WTC11 (cell line): ENCODE measurements at regions of chr22 and their contacts with region 1.

Region 1: GRCh38 chr22:23281406-23282088 is 101.2 kb downstream of the BCR start:
- DNase-seq: peak; percentile 94
- ATAC-seq: peak; percentile 92
- H3K4me3 Mint-ChIP-seq: no peak overlapping the region
- H3K27ac Mint-ChIP-seq: no peak overlapping the region
- H3K4me1 Mint-ChIP-seq: no peaks in the 10 kb centered on the region; the same call in 1 of the 2 replicates
- H3K27me3 Mint-ChIP-seq: no peaks in the 10 kb centered on the region
- CTCF ChIP-seq: peak; percentile 89

Region 2: DNA sequence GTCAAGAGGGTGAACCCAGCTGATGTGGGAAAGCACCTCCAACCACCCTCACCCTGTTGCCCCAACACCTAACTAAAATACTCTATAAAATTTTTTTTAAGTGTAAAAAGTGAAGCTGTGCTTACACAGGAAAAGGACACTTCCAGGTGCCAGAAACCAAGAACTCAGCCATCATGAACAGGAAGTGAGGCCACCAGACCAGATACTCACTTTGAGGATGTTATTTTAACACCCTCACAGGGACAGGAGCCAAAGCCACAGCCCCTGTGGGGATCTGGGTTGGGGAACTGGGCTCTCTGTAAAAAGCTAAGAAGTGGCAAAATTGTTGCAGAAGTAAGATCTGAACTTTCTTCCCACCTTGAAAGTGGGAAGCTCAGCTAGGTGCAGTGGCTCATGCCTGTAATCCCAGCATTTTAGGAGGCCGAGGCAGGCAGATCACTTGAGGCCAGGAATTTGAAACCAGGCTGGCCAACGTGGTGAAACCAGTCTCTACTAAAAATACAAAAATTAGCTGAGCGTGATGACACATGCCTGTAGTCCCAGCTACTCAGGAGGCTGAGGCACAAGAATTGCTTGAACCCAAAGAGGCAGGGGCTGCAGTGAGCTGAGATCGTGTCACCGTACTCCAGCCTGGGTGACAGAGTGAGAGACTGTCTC is 143.5 kb before region 1 on chr22:
- CTCF ChIA-PET with region 1: interaction called, 13 read pairs
- POLR2A ChIA-PET with region 1: no interaction called
- DNase-seq: no peak
- ATAC-seq: no peak
- H3K4me3 Mint-ChIP-seq: no peak overlapping the region
- H3K27ac Mint-ChIP-seq: no peak overlapping the region
- H3K4me1 Mint-ChIP-seq: peaks cover 20% of the 10 kb centered on the region
- H3K27me3 Mint-ChIP-seq: 0 out of 2 replicates have a peak, but pooled peaks cover 3% of the 10 kb centered on the region
- CTCF ChIP-seq: no peak

Region 3: GRCh38 chr22:23152315-23153113 is 129.0 kb before region 1 on chr22:
- CTCF ChIA-PET with region 1: interaction called, 72 read pairs
- POLR2A ChIA-PET with region 1: interaction called, 3 read pairs
- DNase-seq: no peak
- ATAC-seq: no peak
- H3K4me3 Mint-ChIP-seq: no peak overlapping the region
- H3K27ac Mint-ChIP-seq: no peak overlapping the region
- H3K4me1 Mint-ChIP-seq: peaks cover 47% of the 10 kb centered on the region
- H3K27me3 Mint-ChIP-seq: peaks cover 4% of the 10 kb centered on the region
- CTCF ChIP-seq: no peak

Region 4: DNA sequence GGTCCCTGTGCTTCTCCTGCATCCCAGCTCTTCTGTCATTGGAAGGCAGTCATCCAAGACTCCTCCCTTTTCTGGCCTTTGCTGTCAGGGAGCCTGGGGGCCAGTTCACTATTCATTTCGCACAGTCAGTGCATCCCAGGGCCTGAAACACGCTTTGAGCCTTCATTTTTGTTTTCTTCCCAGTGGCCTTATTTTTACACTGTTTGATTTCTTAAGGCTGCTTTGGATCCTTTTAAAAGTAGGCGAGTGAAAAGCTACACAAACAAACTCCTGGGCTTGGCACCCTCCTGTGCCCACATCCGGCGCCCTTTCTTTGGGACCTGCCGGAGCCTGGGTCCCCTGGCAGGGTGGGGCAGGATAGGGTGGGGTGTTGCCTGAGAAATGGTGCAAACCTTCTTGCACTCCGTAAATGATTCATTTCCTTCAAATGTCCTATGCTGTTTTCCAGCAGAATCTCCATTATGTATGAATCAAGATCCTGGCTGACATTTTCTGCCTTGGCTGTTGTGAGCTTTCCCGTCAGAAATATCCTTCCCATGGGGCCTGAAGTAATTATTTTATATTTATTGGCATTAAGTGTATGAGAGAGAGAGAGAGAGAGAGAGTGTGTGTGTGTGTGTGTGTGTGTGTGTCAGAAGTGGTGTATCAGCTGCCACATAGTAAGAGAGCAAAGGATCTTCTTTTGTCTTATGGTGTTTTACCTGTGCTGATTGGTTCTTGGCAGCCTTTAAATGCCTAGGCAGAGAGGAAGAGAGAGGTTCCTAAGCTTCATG is 55.6 kb before region 1 on chr22:
- CTCF ChIA-PET with region 1: interaction called, 11 read pairs
- POLR2A ChIA-PET with region 1: no interaction called
- DNase-seq: no peak
- ATAC-seq: peak; percentile 7; the same call in 1 of the 2 replicates
- H3K4me3 Mint-ChIP-seq: no peak overlapping the region
- H3K27ac Mint-ChIP-seq: peak overlapping the region; percentile 29
- H3K4me1 Mint-ChIP-seq: peaks cover 84% of the 10 kb centered on the region
- H3K27me3 Mint-ChIP-seq: no peaks in the 10 kb centered on the region; the same call in 1 of the 2 replicates
- CTCF ChIP-seq: no peak

Region 5: DNA sequence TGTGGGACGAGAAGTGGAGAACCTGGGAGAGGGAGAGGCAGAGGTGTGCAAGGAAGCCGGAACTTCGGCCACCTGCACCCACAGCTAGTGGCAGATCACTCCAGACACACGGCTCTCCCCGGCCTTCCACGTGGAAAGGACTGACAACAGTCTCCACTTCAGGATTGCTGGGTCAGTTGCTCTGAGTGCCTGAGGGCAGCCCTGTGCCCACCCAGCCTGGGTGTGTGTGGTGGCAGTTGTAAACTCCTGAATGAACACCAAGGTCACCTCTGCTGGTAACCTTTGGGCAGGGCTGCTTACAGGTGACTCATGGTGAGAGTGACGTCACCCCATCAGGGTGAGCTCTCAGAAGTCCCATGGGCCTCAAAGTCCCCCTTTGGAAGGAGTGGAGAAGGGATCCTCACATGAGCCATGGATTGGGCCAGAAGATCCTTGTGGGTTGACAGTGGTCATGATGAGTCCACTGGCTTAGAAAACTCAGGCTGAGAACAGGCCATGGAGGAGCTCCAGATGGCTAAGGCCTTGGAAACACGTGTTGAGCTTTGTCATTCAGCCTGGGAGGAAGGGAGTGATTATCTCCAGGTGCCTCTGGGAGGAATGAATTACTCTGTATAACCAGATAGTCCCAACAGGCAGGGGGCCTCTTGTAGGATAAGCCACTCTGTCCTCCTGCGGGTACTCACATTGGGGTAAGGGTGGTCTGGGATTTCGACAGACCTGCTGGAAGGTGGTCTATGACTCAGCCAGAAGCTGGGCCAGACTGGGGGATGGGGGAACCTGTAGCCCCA is 29.9 kb before region 1 on chr22:
- CTCF ChIA-PET with region 1: interaction called, 10 read pairs
- POLR2A ChIA-PET with region 1: no interaction called
- DNase-seq: no peak
- ATAC-seq: no peak
- H3K4me3 Mint-ChIP-seq: no peak overlapping the region
- H3K27ac Mint-ChIP-seq: peak overlapping the region; percentile 19; the same call in 1 of the 2 replicates
- H3K4me1 Mint-ChIP-seq: peaks cover 65% of the 10 kb centered on the region
- H3K27me3 Mint-ChIP-seq: no peaks in the 10 kb centered on the region
- CTCF ChIP-seq: no peak

Region 6: GRCh38 chr22:23270212-23270733 is 11.3 kb before region 1 on chr22:
- CTCF ChIA-PET with region 1: interaction called, 47 read pairs
- POLR2A ChIA-PET with region 1: interaction called, 4 read pairs
- DNase-seq: no peak
- ATAC-seq: peak; percentile 43
- H3K4me3 Mint-ChIP-seq: no peak overlapping the region
- H3K27ac Mint-ChIP-seq: peak overlapping the region; percentile 90; the same call in 1 of the 2 replicates
- H3K4me1 Mint-ChIP-seq: peaks cover 45% of the 10 kb centered on the region
- H3K27me3 Mint-ChIP-seq: no peaks in the 10 kb centered on the region
- CTCF ChIP-seq: no peak